H1 (cell line): ENCODE measurements at regions of chr6 and their contacts with region 1.

Region 1: DNA sequence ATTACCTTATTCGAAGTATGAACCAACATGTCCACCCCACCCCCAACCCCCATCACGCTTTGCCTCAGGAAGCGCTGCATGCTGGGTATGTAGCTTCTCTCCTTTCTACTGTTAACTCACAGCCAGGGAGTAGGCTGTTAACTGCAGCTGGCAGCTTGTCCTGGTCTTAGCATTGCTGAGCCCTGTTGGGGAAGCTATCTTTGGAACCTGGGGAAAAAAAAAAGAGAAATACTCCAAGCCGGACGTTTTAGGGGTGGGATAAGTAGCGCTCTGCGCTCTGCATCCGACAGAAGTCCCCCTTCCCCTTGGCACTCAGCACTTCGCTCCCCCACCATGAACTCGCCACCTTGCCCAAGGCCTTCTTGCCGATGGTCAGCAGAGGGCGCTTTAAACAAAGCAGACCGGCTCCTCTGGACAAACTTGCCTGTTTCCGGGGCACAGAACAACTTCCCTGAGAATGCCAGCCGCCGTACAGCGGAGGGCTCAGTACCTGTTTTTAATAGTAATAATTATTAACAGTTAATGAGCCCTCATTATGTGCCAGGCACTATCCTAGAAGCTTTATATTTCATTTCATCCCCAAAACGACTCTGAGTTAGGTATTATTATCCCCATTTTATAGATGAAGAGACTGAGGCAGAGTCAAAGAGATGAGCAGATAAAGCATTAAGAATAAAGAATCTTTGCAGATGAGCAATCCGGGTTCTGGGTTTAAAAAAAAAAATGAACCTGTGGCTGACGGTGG is 35.2 kb upstream of the MDFI start:
- DNase-seq: peak; percentile 61 to 84
- H3K4me3 ChIP-seq: peak overlapping the region in 3 of 4 experiments; percentile 32 to 54 (median 33); a peak in 5 of 8 replicates
- H3K27ac ChIP-seq: no peak overlapping the region
- H3K4me1 ChIP-seq: peaks cover 0 to 30% (median 11%) of the 10 kb centered on the region in 4 experiments; a peak in 6 of 7 replicates
- H3K27me3 ChIP-seq: no peaks in the 10 kb centered on the region
- CTCF ChIP-seq: peak in 2 of 3 experiments; percentile 94 to 95; a peak in 3 of 4 replicates
- EP300 ChIP-seq: no peak; a peak in 1 of 3 replicates
- POLR2A ChIP-seq: 0 out of 3 replicates have a peak, but pooled peaks of 1 of the 2 experiments have one; percentile 25
- RAD21 ChIP-seq: peak; percentile 95 to 96

Region 2: GRCh38 chr6:41442800-41443501 is 160.1 kb before region 1 on chr6:
- CTCF ChIA-PET with region 1: interaction called, 14 read pairs
- POLR2A ChIA-PET with region 1: no interaction called
- DNase-seq: peak; percentile 71 to 93
- H3K4me3 ChIP-seq: peak overlapping the region; percentile 43 to 76 (median 51)
- H3K27ac ChIP-seq: peak overlapping the region; percentile 10; the same call in 1 of the 2 replicates
- H3K4me1 ChIP-seq: peaks cover 10 to 24% (median 14%) of the 10 kb centered on the region in 4 experiments
- H3K27me3 ChIP-seq: peaks cover 1 to 21% (median 13%) of the 10 kb centered on the region in 4 experiments
- CTCF ChIP-seq: peak; percentile 80 to 87 (median 83)
- EP300 ChIP-seq: no peak
- POLR2A ChIP-seq: no peak; a peak in 1 of 3 replicates
- RAD21 ChIP-seq: peak; percentile 67 to 78

Region 3: DNA sequence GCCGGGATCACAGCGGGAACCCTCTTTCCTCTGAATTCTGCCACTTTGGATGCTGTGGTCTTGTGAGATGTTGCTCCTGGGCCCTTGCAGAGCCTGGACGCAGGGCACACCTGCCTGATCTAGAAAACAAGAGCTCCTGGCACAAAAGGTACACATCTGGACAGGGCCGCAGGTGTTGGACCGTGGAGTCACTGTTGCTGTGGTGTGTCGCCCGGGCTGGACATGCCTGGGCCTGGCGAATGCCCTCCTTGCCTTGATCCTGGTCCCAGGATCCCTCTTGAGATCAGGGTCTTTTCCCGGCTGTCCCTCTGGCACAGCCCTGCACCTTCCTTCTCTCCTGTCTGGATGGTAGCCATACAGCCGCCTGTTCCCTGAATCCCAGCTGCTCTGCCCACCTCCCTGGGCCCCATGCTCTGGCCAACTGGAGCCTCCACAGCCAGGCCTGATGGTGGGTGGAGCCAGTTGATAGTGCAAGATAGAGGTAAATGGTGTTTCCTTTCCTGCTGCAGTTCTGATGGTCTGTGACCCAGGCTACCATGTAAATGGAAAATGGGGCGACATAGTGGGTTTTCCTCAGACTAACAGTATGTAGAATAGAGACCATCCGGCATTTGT is 51.8 kb before region 1 on chr6:
- CTCF ChIA-PET with region 1: interaction called, 17 read pairs
- POLR2A ChIA-PET with region 1: interaction called, 4 read pairs
- DNase-seq: no peak
- H3K4me3 ChIP-seq: no peak overlapping the region
- H3K27ac ChIP-seq: no peak overlapping the region
- H3K4me1 ChIP-seq: peaks cover 41 to 70% (median 50%) of the 10 kb centered on the region in 4 experiments
- H3K27me3 ChIP-seq: peaks cover 20 to 78% (median 73%) of the 10 kb centered on the region in 4 experiments
- CTCF ChIP-seq: no peak
- EP300 ChIP-seq: no peak
- POLR2A ChIP-seq: no peak
- RAD21 ChIP-seq: no peak

Region 4: GRCh38 chr6:41591859-41592502 is 11.1 kb before region 1 on chr6:
- CTCF ChIA-PET with region 1: interaction called, 10 read pairs
- POLR2A ChIA-PET with region 1: interaction called, 4 read pairs
- DNase-seq: peak in 1 of 2 experiments; percentile 97
- H3K4me3 ChIP-seq: no peak overlapping the region
- H3K27ac ChIP-seq: no peak overlapping the region
- H3K4me1 ChIP-seq: peaks cover 3 to 17% (median 9%) of the 10 kb centered on the region in 4 experiments
- H3K27me3 ChIP-seq: no peaks in the 10 kb centered on the region
- CTCF ChIP-seq: peak in 2 of 3 experiments; percentile 90 to 91; a peak in 3 of 4 replicates
- EP300 ChIP-seq: no peak
- POLR2A ChIP-seq: no peak
- RAD21 ChIP-seq: peak; percentile 95 to 96

Region 5: DNA sequence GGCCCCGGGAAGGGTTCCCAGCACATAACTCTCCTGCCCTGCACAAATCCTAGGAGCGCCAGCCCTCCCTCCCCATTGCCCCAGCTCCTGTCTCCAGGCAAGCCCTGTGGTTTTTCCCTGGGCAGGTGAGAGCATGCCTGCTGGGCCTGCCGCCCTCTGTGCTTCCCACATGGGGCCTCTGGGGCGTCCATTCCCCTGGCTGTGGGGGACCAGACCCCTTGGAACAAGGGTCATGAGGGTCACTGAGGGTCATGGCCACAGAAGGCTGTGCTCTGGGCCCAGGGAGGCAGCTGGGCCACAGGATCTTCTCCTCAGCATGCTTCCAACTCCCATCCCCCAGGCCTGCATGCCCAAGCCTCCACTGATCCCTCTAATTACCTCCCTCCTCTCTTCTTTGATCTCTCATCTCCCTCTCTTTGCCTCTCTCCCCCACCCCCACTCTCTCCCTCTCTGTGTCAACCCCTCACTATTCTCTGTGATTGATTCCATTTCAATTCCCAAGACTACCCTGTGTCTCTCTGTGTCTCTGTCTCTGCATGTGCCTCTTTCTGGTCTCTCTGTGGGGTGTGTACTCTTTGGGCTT is 41.4 kb after region 1 on chr6:
- CTCF ChIA-PET with region 1: interaction called, 28 read pairs
- POLR2A ChIA-PET with region 1: interaction called, 4 read pairs
- DNase-seq: peak in 1 of 2 experiments; percentile 55
- H3K4me3 ChIP-seq: 0 out of 8 replicates have a peak overlapping the region, but pooled peaks of 2 of the 4 experiments have one; percentile 9 to 14
- H3K27ac ChIP-seq: no peak overlapping the region
- H3K4me1 ChIP-seq: peaks cover 8 to 52% (median 37%) of the 10 kb centered on the region in 4 experiments
- H3K27me3 ChIP-seq: peaks cover 0 to 26% (median 13%) of the 10 kb centered on the region in 4 experiments; a peak in 5 of 7 replicates
- CTCF ChIP-seq: no peak
- EP300 ChIP-seq: no peak
- POLR2A ChIP-seq: no peak
- RAD21 ChIP-seq: no peak

Region 6: GRCh38 chr6:41675176-41675770 is 72.2 kb after region 1 on chr6:
- CTCF ChIA-PET with region 1: interaction called, 164 read pairs
- POLR2A ChIA-PET with region 1: interaction called, 3 read pairs
- DNase-seq: no peak
- H3K4me3 ChIP-seq: no peak overlapping the region
- H3K27ac ChIP-seq: no peak overlapping the region
- H3K4me1 ChIP-seq: peaks cover 0 to 14% (median 10%) of the 10 kb centered on the region in 4 experiments; a peak in 6 of 7 replicates
- H3K27me3 ChIP-seq: peaks cover 0 to 5% (median 3%) of the 10 kb centered on the region in 4 experiments; a peak in 4 of 7 replicates
- CTCF ChIP-seq: no peak
- EP300 ChIP-seq: no peak
- POLR2A ChIP-seq: no peak
- RAD21 ChIP-seq: no peak